Activated CD4-positive, alpha-beta T cell treated with anti-CD3 and anti-CD28 coated beads, Interleukin-2, amount 10 ng/mL, durations not matched to agents 24 days and 14 days (primary cell): ENCODE measurements at regions of chr20 and their contacts with region 1.

Region 1: DNA sequence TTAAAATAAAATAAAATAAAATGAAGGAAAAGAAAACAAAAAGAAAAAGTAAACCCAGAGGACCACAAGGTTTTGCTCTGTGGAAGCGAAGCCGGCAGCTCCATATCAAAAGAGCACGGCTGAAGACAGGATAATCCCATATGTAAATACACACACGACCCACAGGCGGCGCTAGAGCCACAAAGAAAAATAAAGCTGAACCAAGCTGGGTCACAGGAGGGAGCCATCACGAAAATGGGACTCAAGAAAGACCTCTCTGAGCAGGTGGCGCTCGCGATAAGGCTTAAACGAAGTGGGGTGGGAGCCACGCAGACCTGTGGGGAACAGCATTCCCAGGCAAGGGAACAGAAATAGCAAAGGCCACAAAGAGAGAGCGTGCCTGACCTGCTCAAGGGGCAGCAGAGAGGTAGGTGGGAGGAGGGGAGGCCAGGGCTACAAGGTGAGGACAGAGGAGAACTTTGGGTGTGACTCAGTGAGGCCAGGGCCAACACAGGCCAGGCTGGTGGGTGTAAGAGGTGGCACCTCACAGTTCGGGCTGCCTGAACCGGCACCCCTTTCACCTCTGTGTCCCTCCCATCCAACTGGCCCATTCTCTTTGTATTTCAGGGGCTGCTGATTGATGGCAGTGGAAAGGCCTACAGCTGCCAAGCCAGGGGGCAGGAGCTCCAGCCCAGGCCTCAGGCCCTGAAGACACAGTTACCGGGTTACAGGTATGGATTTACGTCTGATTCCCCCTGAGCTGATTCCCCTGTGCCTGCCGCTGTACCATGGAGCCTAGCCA is 26.0 kb downstream of the PTGIS start:
- DNase-seq: peak; percentile 90
- H3K4me3 Mint-ChIP-seq: peak overlapping the region; percentile 33
- H3K27ac Mint-ChIP-seq: peak overlapping the region; percentile 95
- H3K4me1 Mint-ChIP-seq: peaks cover 31% of the 10 kb centered on the region
- H3K27me3 Mint-ChIP-seq: peaks cover 2% of the 10 kb centered on the region

Region 2: GRCh38 chr20:49411221-49411925 is 130.6 kb before region 1 on chr20:
- intact Hi-C with region 1: no loop called
- DNase-seq: no peak
- H3K4me3 Mint-ChIP-seq: no peak overlapping the region
- H3K27ac Mint-ChIP-seq: no peak overlapping the region
- H3K4me1 Mint-ChIP-seq: no peaks in the 10 kb centered on the region
- H3K27me3 Mint-ChIP-seq: peaks cover 39% of the 10 kb centered on the region

Region 3: GRCh38 chr20:49508435-49509199 is 33.3 kb before region 1 on chr20:
- intact Hi-C with region 1: no loop called
- DNase-seq: peak; percentile 65
- H3K4me3 Mint-ChIP-seq: no peak overlapping the region
- H3K27ac Mint-ChIP-seq: peak overlapping the region; percentile 69
- H3K4me1 Mint-ChIP-seq: peaks cover 5% of the 10 kb centered on the region
- H3K27me3 Mint-ChIP-seq: peaks cover 32% of the 10 kb centered on the region

Region 4: DNA sequence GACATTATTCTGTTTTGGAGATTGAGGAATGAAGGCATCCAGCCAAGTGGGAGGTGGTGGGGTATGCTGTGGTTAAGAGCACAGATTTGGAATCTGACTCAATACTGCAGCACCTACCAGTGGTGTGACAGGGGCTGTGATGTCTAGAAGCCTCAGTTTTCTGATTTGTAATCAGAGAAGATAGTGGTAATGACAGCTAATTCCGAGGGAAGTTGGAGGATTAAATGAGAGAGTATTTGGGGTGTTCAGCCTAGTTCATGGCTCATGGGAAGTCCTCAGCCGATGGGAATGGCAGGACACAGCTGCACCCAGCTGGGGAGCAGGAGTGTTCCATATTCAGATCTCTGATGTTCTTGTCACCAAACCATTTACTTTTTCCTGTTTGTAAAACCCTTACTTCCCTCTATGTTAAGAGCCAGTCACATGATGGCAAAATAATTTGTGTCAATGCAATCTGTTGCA is 280.0 kb after region 1 on chr20:
- intact Hi-C with region 1: loop called (anchors 5 kb)
- DNase-seq: peak; percentile 58
- H3K4me3 Mint-ChIP-seq: peak overlapping the region; percentile 56
- H3K27ac Mint-ChIP-seq: peak overlapping the region; percentile 72
- H3K4me1 Mint-ChIP-seq: peaks cover 46% of the 10 kb centered on the region
- H3K27me3 Mint-ChIP-seq: no peaks in the 10 kb centered on the region

Region 5: GRCh38 chr20:49846206-49846807 is 304.4 kb after region 1 on chr20:
- intact Hi-C with region 1: loop called (anchors 2 kb)
- DNase-seq: peak; percentile 88
- H3K4me3 Mint-ChIP-seq: no peak overlapping the region
- H3K27ac Mint-ChIP-seq: no peak overlapping the region
- H3K4me1 Mint-ChIP-seq: peaks cover 18% of the 10 kb centered on the region
- H3K27me3 Mint-ChIP-seq: no peaks in the 10 kb centered on the region

Region 6: DNA sequence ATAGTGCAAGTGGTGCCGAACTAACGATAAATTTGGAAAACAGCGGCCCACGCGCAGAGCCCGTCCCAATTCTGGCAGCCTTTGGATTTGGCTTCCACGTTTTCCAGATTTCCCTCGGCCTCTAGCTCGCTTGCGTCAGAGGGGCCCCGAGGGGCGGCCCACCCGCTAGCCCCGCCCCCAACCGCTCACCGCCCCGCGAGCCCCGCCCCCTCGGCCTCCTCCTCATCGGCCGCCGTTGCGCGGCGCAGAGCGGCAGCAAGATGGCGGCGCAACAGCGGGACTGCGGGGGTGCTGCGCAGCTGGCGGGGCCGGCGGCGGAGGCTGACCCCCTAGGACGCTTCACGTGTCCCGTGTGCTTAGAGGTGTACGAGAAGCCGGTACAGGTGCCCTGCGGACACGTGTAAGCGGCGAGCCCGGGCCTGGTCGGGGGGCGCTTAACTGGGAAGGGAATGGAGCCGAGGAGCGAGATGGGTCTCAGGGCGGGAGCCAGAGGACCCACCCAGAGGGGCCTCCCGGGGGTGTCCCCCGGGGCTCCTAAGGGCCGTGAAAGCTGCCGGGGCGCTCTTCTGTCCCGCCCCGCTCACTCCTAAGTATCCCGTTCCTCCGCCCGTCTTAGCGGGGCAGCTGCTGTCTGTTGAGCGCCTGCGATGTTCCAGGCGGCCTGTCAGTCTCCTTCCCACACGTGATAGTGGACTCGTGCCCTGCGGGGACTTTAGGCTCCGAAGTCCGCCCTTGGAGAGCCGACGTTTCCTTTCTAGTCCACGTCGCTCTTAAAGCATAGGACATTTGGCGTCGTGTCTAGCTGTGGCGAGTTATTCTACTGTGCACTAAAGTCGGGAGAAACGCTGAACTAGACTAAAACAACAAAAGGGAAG is 394.5 kb after region 1 on chr20 and contains the start of gene RNF114:
- intact Hi-C with region 1: loop called (anchors 5 kb)
- DNase-seq: peak; percentile 95
- H3K4me3 Mint-ChIP-seq: peak within 1 kb of the TSS; percentile 94
- H3K27ac Mint-ChIP-seq: peak within 1 kb of the TSS; percentile 88
- H3K4me1 Mint-ChIP-seq: peaks cover 40% of the 10 kb centered on the region
- H3K27me3 Mint-ChIP-seq: no peaks in the 10 kb centered on the region
- total RNA-seq, gene RNF114: 60.1 and 69.3 TPM in 2 replicates